Heart left ventricle (tissue), 16 donors: ENCODE measurements at regions of chr17 and their contacts with region 1.

Region 1: GRCh38 chr17:64736804-64737492 is 74.8 kb upstream of the SMURF2 start:
- DNase-seq: peak in 1 of 5 donors; percentile 19
- ATAC-seq: peak in 1 of 4 donors; percentile 33
- H3K4me3 ChIP-seq: no peak overlapping the region
- H3K27ac ChIP-seq: no peak overlapping the region
- H3K4me1 ChIP-seq: peaks cover 0 to 47% (median 23%) of the 10 kb centered on the region in 12 donors
- H3K27me3 ChIP-seq: no peaks in the 10 kb centered on the region
- CTCF ChIP-seq: peak; percentile 32 to 65 (median 55)
- POLR2A ChIP-seq: no peak

Region 2: DNA sequence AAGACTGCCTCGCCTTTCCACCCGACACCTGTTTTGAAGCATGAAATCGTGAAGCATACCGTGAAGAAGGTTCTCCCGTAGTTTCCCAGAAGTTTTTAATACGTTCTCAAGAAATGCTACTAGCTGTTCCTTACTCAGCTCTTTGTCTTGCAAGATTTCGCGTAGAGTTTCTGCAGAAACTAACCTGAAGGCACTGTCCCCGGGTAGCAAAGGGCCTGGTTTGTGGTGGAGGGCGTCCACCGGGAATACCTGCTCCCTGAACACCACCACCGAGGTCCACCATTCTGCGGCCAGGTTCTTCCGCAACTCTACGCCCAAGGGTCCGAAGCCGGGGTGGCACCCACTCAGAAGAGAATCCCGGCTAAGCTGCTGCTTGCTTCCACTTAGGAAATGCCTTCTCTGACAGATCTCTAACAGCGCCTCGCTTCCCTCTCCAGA is 240.6 kb before region 1 on chr17:
- intact Hi-C with region 1: no loop called
- DNase-seq: peak in 1 of 5 donors; percentile 32
- ATAC-seq: no peak
- H3K4me3 ChIP-seq: peak overlapping the region; percentile 44 to 89 (median 68)
- H3K27ac ChIP-seq: peak overlapping the region in 11 of 12 donors; percentile 73 to 91 (median 84)
- H3K4me1 ChIP-seq: peaks cover 2 to 84% (median 44%) of the 10 kb centered on the region in 12 donors
- H3K27me3 ChIP-seq: no peaks in the 10 kb centered on the region
- CTCF ChIP-seq: no peak
- POLR2A ChIP-seq: no peak

Region 3: DNA sequence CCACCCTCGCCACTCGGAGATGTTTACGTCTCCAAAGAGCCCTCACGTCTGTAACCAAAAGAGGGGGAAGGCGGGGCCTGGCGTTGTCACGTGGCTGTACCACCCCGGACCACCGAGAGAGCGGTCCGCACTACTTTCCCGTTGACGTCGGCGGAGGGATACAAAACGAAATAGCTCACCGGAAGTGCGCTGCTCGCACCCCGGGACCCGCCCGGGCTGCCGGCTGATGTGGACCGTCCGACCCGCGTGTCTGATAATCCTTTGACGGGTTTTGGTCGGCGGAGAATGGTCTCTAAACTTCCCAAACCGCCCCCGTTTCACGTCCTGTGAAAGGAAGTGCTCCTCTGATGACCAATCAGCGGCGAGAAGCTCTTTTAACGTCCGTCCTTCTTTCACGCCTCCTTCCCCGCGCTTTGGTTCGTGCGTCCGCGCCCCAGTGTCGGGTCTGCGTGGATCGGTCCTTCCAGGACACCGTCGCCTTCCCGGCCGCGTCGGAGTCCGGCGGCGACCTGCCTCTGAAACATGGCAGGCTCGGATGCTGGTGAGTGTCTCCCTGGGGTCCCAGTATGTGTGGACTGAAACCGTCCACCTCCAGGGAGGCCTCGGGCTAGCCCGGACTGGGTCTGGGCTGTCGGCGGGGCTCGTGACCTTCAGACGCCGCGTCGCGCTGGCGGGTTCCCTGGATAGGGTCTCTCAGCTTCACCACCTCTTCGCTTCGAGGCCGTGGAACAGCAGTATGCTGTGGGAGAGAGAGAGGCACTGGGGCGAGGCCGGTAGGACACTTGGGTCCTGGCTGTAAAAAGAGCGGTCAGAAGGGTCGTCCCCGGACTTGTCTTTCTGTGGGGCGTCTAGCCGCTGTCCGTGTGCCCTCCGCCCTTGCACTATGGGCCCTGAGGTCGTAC is 230.1 kb before region 1 on chr17 and contains the start of gene CEP95:
- intact Hi-C with region 1: loop called in 1 of 10 experiments (anchors 5 kb)
- DNase-seq: peak; percentile 96 to 97 (median 96)
- ATAC-seq: peak; percentile 82 to 89 (median 84)
- H3K4me3 ChIP-seq: peak within 1 kb of the TSS; percentile 77 to 99 (median 88)
- H3K27ac ChIP-seq: peak within 1 kb of the TSS; percentile 96 to 100 (median 99)
- H3K4me1 ChIP-seq: peaks cover 14 to 53% (median 49%) of the 10 kb centered on the region in 12 donors
- H3K27me3 ChIP-seq: no peaks in the 10 kb centered on the region
- CTCF ChIP-seq: no peak
- POLR2A ChIP-seq: peak in 1 of 2 donors; percentile 41
- total RNA-seq, gene CEP95: 9.4 to 25.1 (median 13.1) TPM

Region 4: DNA sequence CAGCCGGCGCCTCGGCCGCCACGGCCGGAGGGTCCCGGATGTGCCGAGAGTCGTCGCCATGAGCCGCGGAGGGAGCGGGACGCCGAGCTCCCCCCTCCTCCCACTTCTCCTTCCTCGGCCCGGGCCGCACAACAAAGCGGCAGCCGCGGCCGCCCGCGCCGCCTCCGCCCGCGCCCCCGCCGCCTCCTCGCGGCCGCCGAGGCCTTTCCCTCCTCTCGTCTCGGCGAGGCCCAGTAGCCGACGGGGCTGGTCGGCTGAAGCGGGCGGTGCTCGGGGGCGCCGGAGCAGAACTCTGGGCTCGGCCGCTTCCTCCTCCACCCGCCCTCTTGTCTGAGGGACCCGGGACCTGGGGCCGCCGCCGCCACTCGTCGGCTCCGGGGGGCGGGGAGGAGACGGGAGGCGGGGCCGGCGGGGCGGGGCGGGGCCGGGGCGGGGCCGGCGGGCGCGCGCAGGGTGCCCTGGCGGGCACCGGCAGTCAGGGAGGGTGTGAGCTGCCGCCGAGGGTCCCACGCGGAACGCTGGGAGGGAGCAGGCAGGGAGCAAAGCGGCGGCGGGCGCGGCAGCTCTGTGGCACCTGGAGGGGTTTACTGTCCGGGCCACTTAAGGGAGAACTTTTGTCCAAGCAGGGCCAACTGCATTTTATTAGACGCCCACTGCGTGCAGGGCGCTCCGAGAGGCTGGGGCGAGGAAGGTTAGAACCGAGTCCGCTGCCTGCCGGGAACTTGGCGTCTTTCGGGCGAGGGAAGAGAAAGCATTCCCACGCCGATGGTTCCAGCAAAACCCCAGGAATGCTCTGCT is 74.8 kb before region 1 on chr17 and contains the start of gene SMURF2:
- intact Hi-C with region 1: loop called in 4 of 10 experiments (anchors 5 to 10 kb)
- DNase-seq: peak; percentile 83 to 91 (median 86)
- ATAC-seq: peak; percentile 83 to 98 (median 92)
- H3K4me3 ChIP-seq: peak within 1 kb of the TSS; percentile 55 to 93 (median 80)
- H3K27ac ChIP-seq: peak within 1 kb of the TSS; percentile 84 to 97 (median 94)
- H3K4me1 ChIP-seq: peaks cover 0 to 43% (median 19%) of the 10 kb centered on the region in 12 donors
- H3K27me3 ChIP-seq: no peaks in the 10 kb centered on the region
- CTCF ChIP-seq: peak in 2 of 12 donors; percentile 16 to 31
- POLR2A ChIP-seq: peak; percentile 90 to 95
- total RNA-seq, gene SMURF2: 8.7 to 17.5 (median 12.6) TPM